Activated CD4-positive, alpha-beta memory T cell treated with anti-CD3 and anti-CD28 coated beads for 36 hours (primary cell): ENCODE measurements at regions of chr16 and their contacts with region 1.

Region 1: DNA sequence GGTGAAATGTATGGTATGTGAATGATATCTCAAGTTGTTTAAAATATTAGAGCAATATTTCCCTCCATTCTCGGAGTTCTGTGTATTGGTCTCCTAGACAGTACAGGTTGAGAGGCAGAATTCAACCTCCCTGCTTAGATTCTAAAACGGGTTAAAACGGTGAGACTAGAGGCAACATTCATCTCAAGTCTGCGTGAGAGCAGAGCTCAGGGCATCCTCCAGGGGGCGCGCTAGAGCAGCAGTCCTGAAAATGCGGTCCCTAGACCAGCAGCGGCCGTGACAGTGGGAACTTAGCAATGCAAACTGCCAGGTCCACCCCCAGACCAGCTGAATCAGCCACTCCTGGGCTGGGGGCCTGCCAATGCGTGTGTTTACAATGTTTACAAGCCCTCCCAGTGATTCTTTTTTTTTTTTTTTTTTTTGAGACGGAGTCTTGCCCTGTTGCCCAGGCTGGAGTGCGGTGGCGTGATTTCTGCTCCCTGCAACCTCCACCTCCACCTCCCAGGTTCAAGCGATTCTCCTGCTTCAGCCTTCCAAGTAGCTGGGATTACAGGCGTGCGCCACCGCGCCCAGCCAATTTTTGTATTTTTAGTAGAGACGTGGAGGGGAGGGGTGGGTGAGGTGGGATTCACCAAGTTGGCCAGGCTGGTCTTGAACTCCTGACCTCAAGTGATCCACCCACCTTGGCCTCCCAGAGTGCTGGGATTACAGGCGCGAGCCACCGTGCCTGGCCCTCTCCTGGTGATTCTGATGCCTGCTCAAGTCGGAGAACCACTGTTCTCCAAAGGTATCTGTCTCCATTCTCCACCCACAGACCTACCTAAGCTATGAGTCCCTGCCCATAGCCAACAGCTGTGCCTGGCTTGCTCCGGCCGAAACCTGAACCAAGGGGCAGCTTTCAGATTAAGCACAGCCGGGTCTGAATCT is 24.2 kb downstream of the KLHL36 start:
- DNase-seq: peak; percentile 88
- H3K4me3 Mint-ChIP-seq: no peak overlapping the region
- H3K27ac Mint-ChIP-seq: no peak overlapping the region
- H3K4me1 Mint-ChIP-seq: peaks cover 1% of the 10 kb centered on the region
- H3K27me3 Mint-ChIP-seq: no peaks in the 10 kb centered on the region

Region 2: DNA sequence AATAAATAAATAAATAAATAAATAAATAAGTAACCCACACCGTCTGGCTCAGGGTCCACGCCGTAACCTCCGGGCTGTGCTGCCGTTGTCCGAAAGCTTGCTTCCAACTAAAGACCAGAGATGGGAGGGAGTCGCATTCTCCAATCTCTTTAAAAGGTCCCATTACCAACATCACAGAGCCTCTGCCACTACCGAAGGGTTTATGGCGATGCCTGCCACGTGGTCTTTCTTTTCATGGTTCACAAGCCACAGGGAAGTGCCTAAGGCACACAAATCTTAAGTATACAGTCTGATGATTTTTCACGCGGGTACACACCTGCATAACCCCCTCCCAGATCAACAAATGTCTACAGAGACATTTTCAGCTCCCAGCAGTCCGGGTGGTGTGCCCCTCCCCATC is 56.0 kb before region 1 on chr16:
- CTCF ChIA-PET with region 1: no interaction called
- POLR2A ChIA-PET with region 1: no interaction called
- intact Hi-C with region 1: no loop called
- DNase-seq: peak; percentile 41
- H3K4me3 Mint-ChIP-seq: peak overlapping the region; percentile 93
- H3K27ac Mint-ChIP-seq: peak overlapping the region; percentile 86
- H3K4me1 Mint-ChIP-seq: peaks cover 46% of the 10 kb centered on the region
- H3K27me3 Mint-ChIP-seq: no peaks in the 10 kb centered on the region

Region 3: GRCh38 chr16:84647828-84648594 is 24.5 kb before region 1 on chr16 and contains the start of gene KLHL36:
- CTCF ChIA-PET with region 1: interaction called, 10 read pairs
- POLR2A ChIA-PET with region 1: no interaction called
- intact Hi-C with region 1: no loop called
- DNase-seq: peak; percentile 78
- H3K4me3 Mint-ChIP-seq: peak within 1 kb of the TSS; percentile 79
- H3K27ac Mint-ChIP-seq: peak within 1 kb of the TSS; percentile 64
- H3K4me1 Mint-ChIP-seq: peaks cover 42% of the 10 kb centered on the region
- H3K27me3 Mint-ChIP-seq: peaks cover 2% of the 10 kb centered on the region
- total RNA-seq, gene KLHL36: 56.1 to 56.8 TPM

Region 4: DNA sequence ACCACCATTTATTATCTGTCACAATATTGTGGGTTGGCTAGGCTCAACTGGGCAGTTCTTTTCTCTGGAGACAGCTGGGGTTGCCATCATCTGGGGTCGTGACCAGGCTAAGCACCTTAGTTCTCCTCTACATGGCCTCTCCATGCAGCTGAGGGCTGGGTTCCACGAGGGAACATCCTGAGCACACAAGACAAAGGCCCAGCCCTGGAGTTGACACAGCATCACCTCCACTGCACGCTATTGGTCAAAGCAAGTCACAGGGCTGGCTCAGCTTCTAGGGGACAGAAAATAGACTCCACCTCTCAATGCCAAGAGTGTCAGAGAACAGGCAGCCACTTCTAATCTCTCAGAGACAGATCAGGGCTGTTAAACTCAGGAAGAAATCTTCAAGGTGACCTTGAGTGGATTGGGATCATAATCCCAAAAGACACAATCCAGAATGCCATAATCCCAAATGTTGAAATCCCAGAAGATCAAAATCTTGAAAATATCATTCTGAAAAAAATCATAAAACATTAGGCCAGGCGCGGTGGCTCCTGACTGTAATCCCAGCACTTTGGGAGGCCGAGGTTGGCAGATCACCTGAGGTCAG is 14.3 kb after region 1 on chr16:
- CTCF ChIA-PET with region 1: interaction called, 11 read pairs
- POLR2A ChIA-PET with region 1: no interaction called
- intact Hi-C with region 1: no loop called
- DNase-seq: no peak
- H3K4me3 Mint-ChIP-seq: no peak overlapping the region
- H3K27ac Mint-ChIP-seq: no peak overlapping the region
- H3K4me1 Mint-ChIP-seq: no peaks in the 10 kb centered on the region
- H3K27me3 Mint-ChIP-seq: peaks cover 9% of the 10 kb centered on the region

Region 5: DNA sequence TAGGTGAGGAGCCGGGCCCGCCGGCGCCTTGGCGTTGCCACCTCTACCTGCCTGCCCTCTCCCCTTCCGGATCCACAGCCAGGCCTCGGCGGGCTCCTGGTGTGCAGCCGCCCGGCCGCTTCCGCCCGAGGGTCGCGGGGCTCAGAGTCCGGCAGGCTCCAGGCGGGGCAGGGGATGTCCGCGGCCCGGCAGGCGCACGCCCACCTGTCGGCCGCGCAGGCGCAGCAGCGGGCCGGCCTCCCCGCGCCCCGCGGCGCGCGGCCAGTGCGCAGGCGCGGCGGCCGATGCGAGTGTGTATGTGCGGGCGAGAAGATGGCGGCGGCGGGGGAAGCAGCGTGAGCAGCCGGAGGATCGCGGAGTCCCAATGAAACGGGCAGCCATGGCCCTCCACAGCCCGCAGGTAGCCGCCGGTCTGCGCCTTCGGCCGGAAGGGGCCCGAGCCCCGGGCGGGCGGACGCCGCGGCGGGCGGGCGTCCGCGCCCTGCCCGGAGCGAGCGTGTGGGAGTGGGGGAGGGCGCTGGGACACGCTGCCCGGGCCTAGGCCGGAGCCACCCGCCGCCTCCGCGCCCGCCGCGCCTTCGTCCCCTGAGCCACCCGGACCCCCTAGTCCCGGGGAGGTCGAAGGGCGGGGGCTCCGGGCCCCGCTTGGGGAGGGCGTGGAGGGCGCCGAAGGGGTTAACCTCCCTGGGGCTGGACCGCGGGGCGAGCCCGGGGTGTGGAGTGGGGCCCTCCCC is 27.3 kb after region 1 on chr16 and contains the start of gene USP10:
- CTCF ChIA-PET with region 1: interaction called, 16 read pairs
- POLR2A ChIA-PET with region 1: no interaction called
- intact Hi-C with region 1: no loop called
- DNase-seq: peak; percentile 88
- H3K4me3 Mint-ChIP-seq: peak within 1 kb of the TSS; percentile 97
- H3K27ac Mint-ChIP-seq: peak within 1 kb of the TSS; percentile 96
- H3K4me1 Mint-ChIP-seq: peaks cover 35% of the 10 kb centered on the region
- H3K27me3 Mint-ChIP-seq: no peaks in the 10 kb centered on the region
- total RNA-seq, gene USP10: 105 to 108 TPM